ENCODE measurements at regions of chr14 and their contacts with region 1.

Region 1: GRCh38 chr14:102316743-102317563 is 2.6 kb upstream of the ZNF839 start:
- DNase-seq: peak; percentile 82
- H3K4me3 ChIP-seq: peak overlapping the region; percentile 47 to 67 (median 48)
- H3K27ac ChIP-seq: peak overlapping the region; percentile 50
- H3K4me1 ChIP-seq: peaks cover 52% of the 10 kb centered on the region
- H3K27me3 ChIP-seq: no peaks in the 10 kb centered on the region
- CTCF ChIP-seq: peak; percentile 37 to 86

Region 2: GRCh38 chr14:101964297-101965144 is 352.4 kb before region 1 on chr14 and contains the start of gene DYNC1H1:
- CTCF ChIA-PET with region 1: no interaction called
- dilution Hi-C with region 1: no loop called
- in situ Hi-C with region 1: loop called in 1 of 2 experiments (anchors 10 kb)
- intact Hi-C with region 1: loop called (anchors 2 kb)
- DNase-seq: peak; percentile 84
- H3K4me3 ChIP-seq: peak within 1 kb of the TSS; percentile 86 to 97 (median 97)
- H3K27ac ChIP-seq: peak within 1 kb of the TSS; percentile 80
- H3K4me1 ChIP-seq: peaks cover 32% of the 10 kb centered on the region
- H3K27me3 ChIP-seq: no peaks in the 10 kb centered on the region
- CTCF ChIP-seq: no peak
- total RNA-seq, gene DYNC1H1: 557 to 626 TPM

Region 3: GRCh38 chr14:101980251-101981099 is 336.5 kb before region 1 on chr14:
- CTCF ChIA-PET with region 1: no interaction called
- dilution Hi-C with region 1: no loop called
- in situ Hi-C with region 1: no loop called
- intact Hi-C with region 1: no loop called
- DNase-seq: peak; percentile 98
- H3K4me3 ChIP-seq: no peak overlapping the region
- H3K27ac ChIP-seq: peak overlapping the region; percentile 74
- H3K4me1 ChIP-seq: peaks cover 32% of the 10 kb centered on the region
- H3K27me3 ChIP-seq: no peaks in the 10 kb centered on the region
- CTCF ChIP-seq: no peak

Region 4: GRCh38 chr14:102096214-102097114 is 220.5 kb before region 1 on chr14:
- CTCF ChIA-PET with region 1: no interaction called
- dilution Hi-C with region 1: no loop called
- in situ Hi-C with region 1: loop called in 1 of 2 experiments (anchors 25 kb)
- intact Hi-C with region 1: loop called (anchors 1 kb)
- DNase-seq: peak; percentile 55
- H3K4me3 ChIP-seq: no peak overlapping the region
- H3K27ac ChIP-seq: no peak overlapping the region
- H3K4me1 ChIP-seq: peaks cover 19% of the 10 kb centered on the region
- H3K27me3 ChIP-seq: no peaks in the 10 kb centered on the region
- CTCF ChIP-seq: peak; percentile 77 to 85

Region 5: DNA sequence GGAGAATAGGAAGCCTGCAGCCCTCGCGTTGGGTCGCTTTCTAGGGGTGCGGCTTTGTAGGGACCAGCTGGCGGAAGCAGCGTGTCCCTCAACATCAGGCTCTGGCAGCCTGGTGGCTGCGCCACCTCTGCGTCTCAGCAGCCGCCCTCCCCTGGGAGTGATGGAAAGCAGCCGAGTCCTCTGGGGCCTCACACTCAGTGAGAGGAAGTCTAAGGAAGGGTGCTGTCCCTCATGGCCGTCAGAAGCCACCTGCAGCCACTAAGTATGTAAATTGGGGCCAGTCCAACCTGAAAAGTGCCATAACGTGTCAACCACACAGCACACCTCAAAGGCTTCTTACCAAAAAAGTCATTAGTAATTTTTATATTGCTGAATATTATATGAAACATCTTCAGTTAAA is 96.9 kb before region 1 on chr14:
- CTCF ChIA-PET with region 1: no interaction called
- dilution Hi-C with region 1: no loop called
- in situ Hi-C with region 1: no loop called
- intact Hi-C with region 1: loop called (anchors 1 kb)
- DNase-seq: no peak
- H3K4me3 ChIP-seq: no peak overlapping the region
- H3K27ac ChIP-seq: no peak overlapping the region
- H3K4me1 ChIP-seq: peaks cover 19% of the 10 kb centered on the region
- H3K27me3 ChIP-seq: no peaks in the 10 kb centered on the region
- CTCF ChIP-seq: no peak

Region 6: GRCh38 chr14:102279688-102280348 is 37.1 kb before region 1 on chr14:
- CTCF ChIA-PET with region 1: no interaction called
- dilution Hi-C with region 1: no loop called
- in situ Hi-C with region 1: no loop called
- intact Hi-C with region 1: loop called (anchors 1 kb)
- DNase-seq: peak; percentile 98
- H3K4me3 ChIP-seq: no peak overlapping the region
- H3K27ac ChIP-seq: peak overlapping the region; percentile 94
- H3K4me1 ChIP-seq: peaks cover 63% of the 10 kb centered on the region
- H3K27me3 ChIP-seq: no peaks in the 10 kb centered on the region
- CTCF ChIP-seq: no peak

Region 7: GRCh38 chr14:102591889-102592763 is 275.2 kb after region 1 on chr14 and contains the start of gene RCOR1:
- CTCF ChIA-PET with region 1: no interaction called
- dilution Hi-C with region 1: no loop called
- in situ Hi-C with region 1: no loop called
- intact Hi-C with region 1: loop called (anchors 5 kb)
- DNase-seq: peak; percentile 96
- H3K4me3 ChIP-seq: peak within 1 kb of the TSS; percentile 87 to 99 (median 92)
- H3K27ac ChIP-seq: peak within 1 kb of the TSS; percentile 92
- H3K4me1 ChIP-seq: peaks cover 11% of the 10 kb centered on the region
- H3K27me3 ChIP-seq: no peaks in the 10 kb centered on the region
- CTCF ChIP-seq: no peak
- total RNA-seq, gene RCOR1: 18.7 to 45.6 TPM

Measured in mammary epithelial cell (primary cell).